ENCODE measurements at regions of chr3 and their contacts with region 1.

Region 1: DNA sequence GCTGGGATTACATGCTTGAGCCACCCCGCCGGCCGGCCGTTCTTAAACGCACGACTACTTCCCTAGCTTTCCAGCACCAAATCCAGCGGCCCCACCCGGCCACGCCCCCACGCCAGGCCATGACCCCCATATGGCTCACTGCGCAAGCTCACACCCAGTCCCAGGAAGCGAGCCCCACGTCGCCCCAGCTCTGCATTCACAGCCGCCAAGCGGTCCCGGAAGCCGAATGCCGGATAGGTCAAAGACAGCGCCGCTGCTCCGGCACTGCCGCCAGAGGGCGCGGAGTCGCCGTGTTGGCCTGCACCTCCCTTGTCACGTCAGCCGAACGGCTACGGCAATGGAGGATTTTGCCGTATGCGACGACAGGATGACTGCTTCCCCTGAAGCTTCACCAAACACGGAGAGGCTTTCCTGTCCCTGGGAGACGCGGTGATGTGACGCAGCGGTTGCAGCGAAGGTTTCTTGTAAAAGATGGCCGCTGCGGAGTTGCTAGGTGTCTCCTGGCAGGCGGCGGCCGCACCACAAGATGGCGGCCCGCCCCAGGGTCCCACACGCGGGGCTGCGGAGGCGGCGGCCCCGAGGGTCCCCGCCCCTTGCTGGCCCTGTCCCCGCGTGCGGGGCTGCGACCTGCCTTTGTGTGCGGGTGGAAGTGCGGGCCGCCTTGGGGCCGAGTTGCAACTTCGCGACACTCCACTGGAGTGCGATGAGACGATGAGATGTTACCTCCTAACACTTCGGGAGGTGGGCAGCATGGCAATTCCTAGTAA is 30.2 kb upstream of the RPN1 start:
- DNase-seq: peak; percentile 96
- H3K4me3 ChIP-seq: peak overlapping the region; percentile 60 to 77 (median 60)
- H3K27ac ChIP-seq: peak overlapping the region; percentile 76
- H3K4me1 ChIP-seq: no peaks in the 10 kb centered on the region
- H3K27me3 ChIP-seq: no peaks in the 10 kb centered on the region
- CTCF ChIP-seq: peak; percentile 100

Region 2: DNA sequence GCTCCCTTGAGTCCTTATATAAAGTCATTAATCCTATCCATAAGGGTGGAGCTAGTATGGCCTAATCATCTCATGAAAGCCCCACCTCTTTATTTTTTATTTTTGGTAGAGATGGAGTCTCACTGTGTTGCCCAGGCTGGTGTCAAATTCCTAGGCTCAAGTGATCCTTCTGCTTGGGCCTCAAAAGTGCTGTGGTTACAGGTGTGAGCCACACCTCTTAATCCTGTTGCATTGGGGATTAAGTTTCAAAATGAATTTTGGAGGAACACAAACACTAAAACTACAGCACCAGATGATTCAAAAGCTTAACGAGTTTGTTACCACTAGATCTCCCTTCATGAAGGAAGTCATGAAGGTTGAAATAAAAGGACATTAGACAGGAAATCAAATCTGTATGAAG is 72.9 kb after region 1 on chr3:
- CTCF ChIA-PET with region 1: interaction called, 3 read pairs
- dilution Hi-C with region 1: loop called (anchors 5 kb)
- in situ Hi-C with region 1: no loop called
- intact Hi-C with region 1: no loop called
- DNase-seq: no peak
- H3K4me3 ChIP-seq: no peak overlapping the region
- H3K27ac ChIP-seq: no peak overlapping the region
- H3K4me1 ChIP-seq: no peaks in the 10 kb centered on the region
- H3K27me3 ChIP-seq: no peaks in the 10 kb centered on the region
- CTCF ChIP-seq: no peak

Region 3: DNA sequence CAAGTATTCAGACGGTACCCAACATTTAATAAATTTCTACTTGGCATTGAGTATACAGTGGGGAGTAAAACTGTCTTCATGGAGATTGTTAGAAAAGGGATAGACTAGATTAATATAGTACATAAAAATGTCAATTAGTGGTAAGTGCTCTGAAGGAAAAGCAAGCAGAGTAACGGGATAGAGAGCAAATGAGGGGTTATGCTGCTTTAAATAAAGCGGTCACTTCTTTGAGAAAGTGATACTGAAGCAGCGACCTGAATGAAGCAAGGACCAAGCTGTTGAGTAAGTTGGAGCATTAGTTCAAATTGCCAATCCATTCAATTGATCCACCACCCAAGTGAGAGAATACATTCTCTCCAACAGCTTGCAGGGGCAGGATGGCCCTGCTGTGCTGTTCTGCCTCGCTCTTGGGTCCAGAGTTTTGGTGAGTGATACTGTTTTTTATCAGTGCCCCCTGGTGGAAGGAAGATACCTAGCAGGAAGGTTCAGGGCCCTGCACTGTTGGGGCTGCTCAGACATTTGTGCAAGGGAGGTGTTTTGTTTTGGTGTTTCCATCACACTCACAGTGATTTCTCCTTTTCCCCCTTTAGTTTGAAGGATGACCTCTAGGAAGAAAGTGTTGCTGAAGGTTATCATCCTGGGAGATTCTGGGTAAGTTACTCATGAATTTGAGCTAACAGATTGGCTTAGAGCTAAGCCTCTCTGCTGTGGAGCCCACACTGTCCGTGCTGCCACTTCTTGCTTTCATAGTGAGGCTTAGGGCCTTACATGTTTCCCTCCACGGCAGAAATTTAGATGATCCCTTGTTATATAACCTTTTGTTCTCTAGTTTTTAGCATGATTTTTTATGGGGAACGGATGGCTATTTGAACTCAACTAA is 114.2 kb after region 1 on chr3:
- CTCF ChIA-PET with region 1: interaction called, 11 read pairs
- dilution Hi-C with region 1: no loop called
- in situ Hi-C with region 1: no loop called
- intact Hi-C with region 1: loop called (anchors 1 kb)
- DNase-seq: peak; percentile 54
- H3K4me3 ChIP-seq: peak overlapping the region in 1 of 3 experiments; percentile 0
- H3K27ac ChIP-seq: peak overlapping the region; percentile 45
- H3K4me1 ChIP-seq: peaks cover 22% of the 10 kb centered on the region
- H3K27me3 ChIP-seq: no peaks in the 10 kb centered on the region
- CTCF ChIP-seq: peak; percentile 79 to 80

Region 4: GRCh38 chr3:128879125-128879969 is 198.6 kb after region 1 on chr3 and contains the start of gene ACAD9:
- CTCF ChIA-PET with region 1: no interaction called
- dilution Hi-C with region 1: no loop called
- in situ Hi-C with region 1: no loop called
- intact Hi-C with region 1: loop called (anchors 10 kb)
- DNase-seq: peak; percentile 97
- H3K4me3 ChIP-seq: peak within 1 kb of the TSS; percentile 82 to 98 (median 94)
- H3K27ac ChIP-seq: peak within 1 kb of the TSS; percentile 97
- H3K4me1 ChIP-seq: peaks cover 21% of the 10 kb centered on the region
- H3K27me3 ChIP-seq: no peaks in the 10 kb centered on the region
- CTCF ChIP-seq: no peak
- total RNA-seq, gene ACAD9: 35.2 to 48.7 TPM

Region 5: DNA sequence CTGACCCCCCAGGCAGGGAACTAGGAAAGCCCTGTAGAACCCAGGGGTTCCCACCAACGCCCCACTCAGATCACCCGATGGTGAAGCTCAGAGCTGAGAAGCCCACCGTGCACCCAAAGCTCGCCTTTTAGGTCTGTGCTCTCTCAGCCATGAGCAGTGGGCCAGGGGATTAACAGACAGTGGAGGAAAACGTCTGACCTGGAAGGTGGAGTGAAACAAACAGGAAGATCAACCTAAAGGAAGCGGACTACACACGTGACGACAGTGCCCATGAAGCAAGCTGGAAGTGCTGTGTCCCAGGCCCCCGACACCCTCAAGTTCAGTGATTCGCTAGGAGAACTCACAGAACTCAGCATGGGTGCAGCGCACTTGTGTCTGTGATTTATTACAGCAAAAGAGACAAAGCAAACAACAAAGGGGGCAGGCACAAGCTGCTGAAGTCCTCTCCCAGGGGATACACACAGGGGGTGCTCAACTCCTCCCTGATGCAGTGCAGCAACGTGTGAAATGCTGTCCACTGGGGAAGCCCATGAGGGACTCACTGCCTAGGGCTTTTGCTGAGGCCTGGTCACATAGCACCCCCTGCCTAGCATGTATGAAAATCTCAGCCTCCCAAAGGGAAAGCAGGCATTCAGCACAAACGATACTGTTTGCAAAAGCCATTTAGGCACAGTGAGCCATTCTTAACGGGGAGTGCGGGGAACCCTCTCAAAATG is 269.6 kb after region 1 on chr3:
- CTCF ChIA-PET with region 1: no interaction called
- dilution Hi-C with region 1: no loop called
- in situ Hi-C with region 1: no loop called
- intact Hi-C with region 1: loop called (anchors 5 kb)
- DNase-seq: no peak
- H3K4me3 ChIP-seq: no peak overlapping the region
- H3K27ac ChIP-seq: no peak overlapping the region
- H3K4me1 ChIP-seq: no peaks in the 10 kb centered on the region
- H3K27me3 ChIP-seq: no peaks in the 10 kb centered on the region
- CTCF ChIP-seq: peak; percentile 6 to 50